Mammary epithelial cell (primary cell): ENCODE measurements at regions of chr19 and their contacts with region 1.

Region 1: DNA sequence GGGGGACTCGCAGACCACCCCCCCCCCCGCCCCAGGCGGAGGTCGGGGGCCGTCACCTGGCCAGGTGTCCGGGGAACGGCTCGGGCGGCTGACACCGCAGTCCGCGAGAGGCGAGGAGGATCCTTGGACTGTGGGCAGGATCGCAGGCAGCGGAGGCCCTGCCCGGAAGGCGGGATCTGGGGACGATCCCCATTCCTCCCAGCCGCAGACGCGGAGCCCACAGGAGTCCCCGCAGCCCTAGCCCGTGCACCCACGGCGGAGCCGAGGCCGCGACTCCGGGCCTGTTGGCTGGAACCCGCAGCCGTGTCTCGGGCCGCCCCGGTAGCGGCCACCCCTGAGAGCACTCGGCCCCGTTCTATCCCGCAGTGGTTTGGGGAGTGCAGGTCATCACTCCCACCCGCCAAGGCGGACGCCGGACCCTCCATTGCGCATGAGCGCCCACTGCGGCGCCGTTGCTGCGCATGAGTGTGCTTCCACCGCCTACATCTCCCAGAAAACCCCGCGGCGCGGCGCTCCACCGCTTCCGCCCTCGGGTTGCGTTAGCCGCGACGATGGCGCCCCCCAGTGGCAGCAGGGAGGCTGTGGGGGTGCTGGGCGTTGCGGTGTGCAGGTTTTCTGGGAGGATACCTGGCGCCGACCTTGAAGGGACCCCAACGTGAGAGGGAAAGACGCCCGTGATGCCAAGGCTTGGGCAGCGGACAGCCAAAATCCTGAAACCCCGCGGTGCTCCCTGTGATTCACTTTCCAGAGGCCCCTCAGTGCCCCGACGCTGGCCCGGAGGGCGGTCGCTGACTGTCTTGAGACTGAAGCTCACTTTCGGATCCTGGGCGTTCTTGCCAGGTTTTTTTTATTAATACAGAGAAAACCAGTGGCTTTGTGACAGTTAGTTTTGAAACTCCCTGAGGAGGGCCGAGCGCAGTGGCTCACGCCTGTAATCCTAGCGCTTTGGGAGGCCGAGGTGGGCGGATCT is 4.4 kb upstream of the ZNF329 start:
- DNase-seq: peak; percentile 92
- H3K4me3 ChIP-seq: peak overlapping the region; percentile 85 to 86 (median 85)
- H3K27ac ChIP-seq: peak overlapping the region; percentile 43
- H3K4me1 ChIP-seq: no peaks in the 10 kb centered on the region
- H3K27me3 ChIP-seq: no peaks in the 10 kb centered on the region
- CTCF ChIP-seq: peak; percentile 90 to 98

Region 2: GRCh38 chr19:57465495-57466395 is 689.2 kb before region 1 on chr19:
- CTCF ChIA-PET with region 1: no interaction called
- dilution Hi-C with region 1: no loop called
- in situ Hi-C with region 1: no loop called
- intact Hi-C with region 1: loop called (anchors 2 kb)
- DNase-seq: peak; percentile 45
- H3K4me3 ChIP-seq: no peak overlapping the region
- H3K27ac ChIP-seq: no peak overlapping the region
- H3K4me1 ChIP-seq: no peaks in the 10 kb centered on the region
- H3K27me3 ChIP-seq: no peaks in the 10 kb centered on the region
- CTCF ChIP-seq: peak; percentile 49 to 71

Region 3: DNA sequence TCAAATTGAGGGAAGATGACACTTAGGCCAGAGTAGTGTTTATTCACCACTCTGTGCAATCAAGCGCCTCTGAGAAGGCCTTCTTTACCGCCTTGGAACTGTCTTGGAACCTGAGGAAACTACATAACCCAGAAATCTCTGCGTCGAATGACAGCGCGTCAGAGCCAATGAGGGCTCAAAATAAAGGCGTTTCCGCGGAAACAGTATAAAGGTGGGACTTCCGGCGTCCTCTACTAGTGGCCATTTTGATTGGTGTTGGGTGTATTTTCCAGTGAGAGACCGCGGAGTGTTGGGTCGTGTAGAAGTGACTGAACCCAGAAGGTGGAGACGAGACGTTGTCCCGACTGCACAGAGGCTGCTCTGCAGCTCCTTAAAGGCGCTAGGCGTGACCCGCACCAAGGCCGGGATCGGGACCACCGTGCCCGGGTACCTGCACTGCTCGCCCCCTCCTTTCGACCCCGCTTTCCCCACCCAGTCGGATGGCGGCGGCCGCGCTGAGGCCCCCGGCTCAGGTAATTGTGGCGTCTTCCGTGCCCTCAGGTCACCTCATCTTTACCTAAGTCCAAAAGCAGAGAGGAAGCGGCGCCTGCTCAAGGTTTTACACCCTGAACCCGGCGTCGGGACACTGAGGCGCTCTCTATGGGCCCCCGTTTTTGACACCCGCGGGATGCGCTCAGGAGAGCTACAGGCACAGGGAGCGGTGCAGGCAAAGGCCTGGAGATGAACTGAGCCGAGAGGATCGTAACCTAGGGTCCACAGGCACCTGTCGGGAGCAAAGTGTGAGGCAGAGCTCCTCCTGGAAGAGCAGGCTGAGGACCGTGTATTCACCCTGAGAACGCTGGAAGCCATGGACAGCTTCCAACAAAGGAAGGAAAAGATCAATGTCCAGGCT is 408.1 kb before region 1 on chr19 and contains the start of gene ZNF776:
- CTCF ChIA-PET with region 1: no interaction called
- dilution Hi-C with region 1: no loop called
- in situ Hi-C with region 1: loop called in 1 of 2 experiments (anchors 10 kb)
- intact Hi-C with region 1: no loop called
- DNase-seq: peak; percentile 90
- H3K4me3 ChIP-seq: peak within 1 kb of the TSS; percentile 78 to 96 (median 89)
- H3K27ac ChIP-seq: peak within 1 kb of the TSS; percentile 58
- H3K4me1 ChIP-seq: peaks cover 7% of the 10 kb centered on the region
- H3K27me3 ChIP-seq: no peaks in the 10 kb centered on the region
- CTCF ChIP-seq: no peak
- total RNA-seq, gene ZNF776: 7.7 to 13.0 TPM

Region 4: DNA sequence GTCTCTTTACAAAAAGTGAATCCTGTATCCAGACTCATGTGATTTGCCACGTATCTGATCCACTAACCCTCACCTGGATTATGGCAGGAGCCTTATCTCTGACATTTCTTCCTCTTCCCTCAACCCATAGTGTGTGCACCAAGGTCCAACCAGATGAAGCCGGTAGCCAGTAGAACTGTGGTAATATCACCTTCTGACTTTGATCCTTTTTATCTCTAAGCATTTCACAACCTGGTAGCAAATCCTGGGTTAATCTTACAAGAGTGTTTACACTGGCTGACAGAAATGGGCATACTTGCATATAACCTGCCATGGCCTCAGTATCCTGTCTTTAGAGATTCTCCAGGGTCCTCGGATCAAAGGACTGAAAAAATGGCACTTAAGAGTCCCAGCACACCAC is 240.4 kb before region 1 on chr19:
- CTCF ChIA-PET with region 1: no interaction called
- dilution Hi-C with region 1: no loop called
- in situ Hi-C with region 1: no loop called
- intact Hi-C with region 1: loop called (anchors 5 kb)
- DNase-seq: no peak
- H3K4me3 ChIP-seq: no peak overlapping the region
- H3K27ac ChIP-seq: no peak overlapping the region
- H3K4me1 ChIP-seq: no peaks in the 10 kb centered on the region
- H3K27me3 ChIP-seq: no peaks in the 10 kb centered on the region
- CTCF ChIP-seq: no peak

Region 5: GRCh38 chr19:58002384-58003173 is 152.4 kb before region 1 on chr19 and contains the start of gene ZNF606:
- CTCF ChIA-PET with region 1: no interaction called
- dilution Hi-C with region 1: no loop called
- in situ Hi-C with region 1: no loop called
- intact Hi-C with region 1: loop called (anchors 2 kb)
- DNase-seq: peak; percentile 86
- H3K4me3 ChIP-seq: peak within 1 kb of the TSS; percentile 57 to 91 (median 77)
- H3K27ac ChIP-seq: peak within 1 kb of the TSS; percentile 62
- H3K4me1 ChIP-seq: no peaks in the 10 kb centered on the region
- H3K27me3 ChIP-seq: no peaks in the 10 kb centered on the region
- CTCF ChIP-seq: no peak
- total RNA-seq, gene ZNF606: 8.0 to 19.0 TPM

Region 6: GRCh38 chr19:58361900-58362271 is 206.9 kb after region 1 on chr19:
- CTCF ChIA-PET with region 1: no interaction called
- dilution Hi-C with region 1: no loop called
- in situ Hi-C with region 1: no loop called
- intact Hi-C with region 1: no loop called
- DNase-seq: no peak
- H3K4me3 ChIP-seq: peak overlapping the region; percentile 61 to 83 (median 64)
- H3K27ac ChIP-seq: peak overlapping the region; percentile 84
- H3K4me1 ChIP-seq: peaks cover 8% of the 10 kb centered on the region
- H3K27me3 ChIP-seq: no peaks in the 10 kb centered on the region
- CTCF ChIP-seq: peak in 1 of 2 donors; percentile 12